Activated naive CD8-positive, alpha-beta T cell treated with anti-CD3 and anti-CD28 coated beads, Interleukin-2, amount 10 ng/mL, durations not matched to agents 7 days and 5 days (primary cell): ENCODE measurements at regions of chr14 and their contacts with region 1.

Region 1: DNA sequence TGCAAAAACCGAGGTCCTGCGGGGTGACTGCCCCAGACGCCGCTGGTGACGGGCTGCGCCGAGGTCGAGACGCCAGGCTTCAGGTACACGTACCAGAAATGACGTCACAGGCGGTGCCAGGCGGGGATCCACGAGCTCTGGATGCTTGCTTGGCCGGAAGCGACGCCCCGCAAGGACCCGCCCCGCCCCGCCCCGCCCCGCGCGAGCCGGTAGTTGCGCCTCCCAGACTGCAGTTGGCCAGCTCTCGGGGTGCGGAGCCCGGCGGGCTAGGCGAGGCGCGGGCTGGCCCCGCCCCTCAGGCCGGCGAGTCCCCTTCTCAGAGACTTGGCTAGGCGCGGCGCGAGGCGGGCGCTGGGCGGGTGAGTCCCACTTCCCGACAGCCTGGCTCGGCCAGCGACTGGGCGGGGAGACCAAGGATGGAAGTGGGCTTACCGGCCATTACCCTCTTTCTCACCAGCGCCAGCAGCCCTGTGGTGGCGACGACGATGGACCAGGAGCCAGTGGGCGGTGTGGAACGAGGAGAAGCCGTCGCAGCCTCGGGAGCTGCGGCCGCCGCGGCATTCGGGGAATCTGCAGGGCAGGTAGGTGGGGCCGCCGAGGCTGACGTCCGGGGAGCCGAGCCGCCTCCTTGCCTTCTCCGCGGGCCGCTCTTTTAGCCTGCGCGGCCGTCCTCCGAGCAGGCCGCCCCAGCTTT is at the start of gene FAM177A1:
- DNase-seq: peak; percentile 95
- ATAC-seq: peak; percentile 95
- H3K4me3 Mint-ChIP-seq: peak within 1 kb of the TSS; percentile 89
- H3K27ac Mint-ChIP-seq: peak within 1 kb of the TSS; percentile 98
- H3K4me1 Mint-ChIP-seq: peaks cover 31% of the 10 kb centered on the region
- H3K27me3 Mint-ChIP-seq: no peaks in the 10 kb centered on the region
- total RNA-seq, gene FAM177A1: 36.5 to 42.5 TPM

Region 2: DNA sequence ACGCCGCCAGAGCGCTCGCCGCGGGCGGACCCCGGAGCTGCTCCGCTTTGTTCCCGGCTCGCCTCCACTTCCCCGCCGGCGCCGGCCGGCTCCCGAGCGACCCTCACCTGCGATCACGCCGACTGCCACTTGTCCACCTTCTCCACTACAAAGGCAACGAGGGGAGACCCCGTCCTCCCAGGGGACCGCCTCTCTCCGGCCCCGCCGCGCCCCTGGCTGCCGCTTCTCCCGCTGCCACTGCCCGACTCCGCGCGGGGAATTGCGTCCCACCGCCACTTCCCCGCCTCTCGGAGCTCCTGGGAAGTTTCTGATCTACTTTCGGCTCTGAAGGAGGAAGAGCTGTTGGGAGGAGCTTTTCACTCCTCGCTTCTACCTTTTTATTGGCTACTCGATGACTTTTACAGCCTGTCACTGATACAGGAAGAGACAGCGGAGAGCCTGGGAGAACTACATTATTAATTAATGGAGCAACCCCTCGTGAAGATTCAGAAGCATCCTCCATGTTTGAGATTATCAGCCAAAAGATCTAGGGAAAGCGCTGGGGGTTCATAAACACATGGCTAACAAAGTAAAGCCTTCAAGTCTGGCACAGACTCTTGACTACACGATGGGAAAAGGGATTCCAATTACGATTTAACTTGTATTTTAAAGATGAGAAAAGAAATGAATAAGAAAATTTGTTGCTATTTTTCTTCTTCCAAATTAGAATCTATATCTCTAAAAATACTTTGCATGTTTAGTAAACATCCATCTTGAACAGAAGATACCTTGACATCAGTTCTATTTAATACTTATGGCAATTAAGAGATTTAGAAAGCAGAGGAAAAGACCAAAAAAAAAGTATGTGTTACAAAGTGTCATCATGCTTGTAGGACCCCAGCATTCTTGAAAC is 170.9 kb before region 1 on chr14 and contains the start of gene BAZ1A:
- POLR2A ChIA-PET with region 1: interaction called, 24 read pairs
- DNase-seq: peak; percentile 71
- ATAC-seq: peak; percentile 20
- H3K4me3 Mint-ChIP-seq: peak within 1 kb of the TSS; percentile 99
- H3K27ac Mint-ChIP-seq: peak within 1 kb of the TSS; percentile 99
- H3K4me1 Mint-ChIP-seq: peaks cover 29% of the 10 kb centered on the region
- H3K27me3 Mint-ChIP-seq: no peaks in the 10 kb centered on the region
- total RNA-seq, gene BAZ1A: 46.1 to 51.8 TPM

Region 3: DNA sequence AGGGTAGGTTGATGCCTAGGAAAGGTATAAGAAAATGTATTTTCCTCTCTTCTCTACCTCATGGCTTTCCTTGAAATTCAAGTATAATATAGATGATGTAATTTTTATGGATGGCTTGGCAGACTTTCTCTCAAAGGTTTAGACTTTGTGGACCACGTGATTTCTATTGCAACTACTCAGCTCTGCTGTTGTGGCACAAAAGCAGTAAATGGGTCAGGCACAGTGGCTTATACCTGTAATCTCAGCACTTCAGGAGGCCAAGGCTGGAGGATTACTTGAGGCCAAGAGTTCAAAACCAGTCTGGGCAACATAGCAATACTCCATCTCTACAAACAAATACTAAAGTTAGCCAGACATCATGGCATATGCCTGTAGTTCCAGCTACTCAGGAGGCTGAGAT is 41.4 kb before region 1 on chr14:
- POLR2A ChIA-PET with region 1: no interaction called
- DNase-seq: no peak
- ATAC-seq: no peak
- H3K4me3 Mint-ChIP-seq: no peak overlapping the region
- H3K27ac Mint-ChIP-seq: no peak overlapping the region
- H3K4me1 Mint-ChIP-seq: peaks cover 2% of the 10 kb centered on the region
- H3K27me3 Mint-ChIP-seq: no peaks in the 10 kb centered on the region

Region 4: DNA sequence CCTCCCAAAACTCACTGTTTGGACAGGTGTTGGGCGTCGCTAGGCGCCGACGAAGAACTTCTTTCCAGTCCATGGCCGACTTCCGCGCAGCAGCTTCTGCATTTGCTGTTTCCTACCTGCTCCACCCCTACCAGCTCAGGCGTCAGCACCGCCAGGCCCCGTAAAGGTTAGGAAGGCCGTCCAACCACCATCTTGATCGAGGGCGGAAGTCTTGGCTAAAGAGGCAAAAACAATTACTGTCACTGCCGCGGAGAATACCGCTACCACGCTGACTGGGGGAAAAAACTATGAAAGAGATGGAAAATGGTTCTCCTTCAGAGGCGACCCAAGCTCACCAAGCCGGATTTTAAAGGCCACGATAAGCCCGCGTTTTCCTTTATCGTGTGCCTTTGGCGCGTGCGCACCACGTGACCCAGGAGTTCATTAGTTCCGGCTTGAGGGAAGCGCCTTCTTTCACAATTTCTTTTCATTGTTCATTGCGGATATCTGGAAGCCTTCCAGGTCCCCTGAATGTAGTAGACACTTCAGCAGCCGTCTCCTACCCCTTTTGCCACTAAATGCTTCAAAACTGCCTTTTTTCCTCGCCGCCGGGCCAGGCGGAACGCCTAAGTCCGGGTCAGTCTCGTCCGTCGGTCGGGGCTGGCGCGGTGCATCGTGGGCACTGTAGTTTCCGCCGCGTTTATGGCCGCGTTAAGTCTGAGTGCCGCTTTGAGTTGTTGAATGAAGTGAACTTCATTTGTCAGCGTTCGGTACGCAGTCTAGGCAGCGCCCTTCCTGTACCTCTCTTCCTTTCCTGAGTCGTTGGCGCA is 75.9 kb after region 1 on chr14 and contains the starts of genes PPP2R3C and PRORP:
- POLR2A ChIA-PET with region 1: interaction called, 29 read pairs
- DNase-seq: peak; percentile 86
- ATAC-seq: peak; percentile 91
- H3K4me3 Mint-ChIP-seq: peak within 1 kb of the TSS; percentile 96
- H3K27ac Mint-ChIP-seq: peak within 1 kb of the TSS; percentile 99
- H3K4me1 Mint-ChIP-seq: peaks cover 40% of the 10 kb centered on the region
- H3K27me3 Mint-ChIP-seq: no peaks in the 10 kb centered on the region
- total RNA-seq, gene PPP2R3C: 34.0 to 39.1 TPM
- total RNA-seq, gene PRORP: 27.8 to 30.2 TPM